Heart right ventricle (tissue), 16 donors: ENCODE measurements at regions of chr4 and their contacts with region 1.

Region 1: GRCh38 chr4:131551306-131551705 is 1597.8 kb upstream of the PCDH10 start:
- DNase-seq: no peak
- ATAC-seq: no peak
- H3K4me3 ChIP-seq: no peak overlapping the region
- H3K27ac ChIP-seq: no peak overlapping the region
- H3K4me1 ChIP-seq: no peaks in the 10 kb centered on the region
- H3K27me3 ChIP-seq: no peaks in the 10 kb centered on the region
- CTCF ChIP-seq: no peak

Region 2: DNA sequence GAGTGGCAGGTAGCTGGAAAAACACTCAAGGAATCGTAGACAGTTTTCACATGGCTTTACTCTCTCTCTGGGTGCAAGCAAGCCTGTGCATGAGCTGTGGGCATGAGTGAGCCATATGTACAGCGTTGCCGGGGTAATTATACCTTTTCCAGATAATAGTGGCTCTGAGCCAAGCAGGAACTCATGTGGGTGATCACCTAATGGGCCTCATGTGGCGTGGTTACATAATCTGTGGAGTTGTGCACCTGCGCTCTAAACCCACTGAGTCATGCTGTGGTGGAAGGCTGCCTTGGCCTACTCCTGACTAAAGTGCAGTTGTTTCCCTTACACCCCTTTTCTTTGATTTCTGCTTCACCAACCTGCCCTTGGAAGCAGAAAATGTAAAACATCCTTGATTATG is 33.3 kb after region 1 on chr4:
- intact Hi-C with region 1: loop called in 1 of 10 experiments (anchors 1 kb)
- DNase-seq: no peak
- ATAC-seq: no peak
- H3K4me3 ChIP-seq: no peak overlapping the region
- H3K27ac ChIP-seq: no peak overlapping the region
- H3K4me1 ChIP-seq: no peaks in the 10 kb centered on the region
- H3K27me3 ChIP-seq: no peaks in the 10 kb centered on the region
- CTCF ChIP-seq: no peak

Region 3: DNA sequence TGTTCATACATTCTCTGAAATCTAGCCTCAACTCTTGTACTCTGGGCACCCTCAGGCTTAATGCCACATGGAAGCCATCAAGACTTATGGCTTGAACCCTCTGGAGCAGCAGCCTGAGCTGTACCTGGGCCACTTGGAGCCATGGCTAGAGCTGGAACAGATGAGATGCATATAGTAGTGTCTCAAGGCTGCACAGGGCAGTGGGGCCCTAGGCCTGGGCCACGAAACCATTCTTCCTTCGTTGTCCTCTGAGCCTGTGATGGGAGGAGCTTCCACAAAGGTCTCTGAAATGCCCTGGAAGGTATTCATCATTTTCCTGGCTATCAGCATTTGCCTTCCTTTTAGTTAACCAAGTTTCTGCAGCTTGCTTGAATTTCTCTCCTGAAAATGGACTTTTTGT is 170.6 kb after region 1 on chr4:
- intact Hi-C with region 1: no loop called
- DNase-seq: no peak
- ATAC-seq: no peak
- H3K4me3 ChIP-seq: no peak overlapping the region
- H3K27ac ChIP-seq: no peak overlapping the region
- H3K4me1 ChIP-seq: no peaks in the 10 kb centered on the region
- H3K27me3 ChIP-seq: no peaks in the 10 kb centered on the region
- CTCF ChIP-seq: no peak